ENCODE measurements at regions of chr1 and their contacts with region 1.

Region 1: GRCh38 chr1:234862944-234863515 is 253.1 kb upstream of the IRF2BP2 start:
- DNase-seq: peak; percentile 51 to 70
- ATAC-seq: peak; percentile 20 to 30
- H3K4me3 ChIP-seq: peak overlapping the region in 2 of 4 donors; percentile 2 to 17
- H3K27ac ChIP-seq: peak overlapping the region; percentile 68 to 84 (median 75)
- H3K4me1 ChIP-seq: peaks cover 39 to 40% of the 10 kb centered on the region in 2 donors
- H3K27me3 ChIP-seq: no peaks in the 10 kb centered on the region
- CTCF ChIP-seq: no peak
- POLR2A ChIP-seq: no peak

Region 2: DNA sequence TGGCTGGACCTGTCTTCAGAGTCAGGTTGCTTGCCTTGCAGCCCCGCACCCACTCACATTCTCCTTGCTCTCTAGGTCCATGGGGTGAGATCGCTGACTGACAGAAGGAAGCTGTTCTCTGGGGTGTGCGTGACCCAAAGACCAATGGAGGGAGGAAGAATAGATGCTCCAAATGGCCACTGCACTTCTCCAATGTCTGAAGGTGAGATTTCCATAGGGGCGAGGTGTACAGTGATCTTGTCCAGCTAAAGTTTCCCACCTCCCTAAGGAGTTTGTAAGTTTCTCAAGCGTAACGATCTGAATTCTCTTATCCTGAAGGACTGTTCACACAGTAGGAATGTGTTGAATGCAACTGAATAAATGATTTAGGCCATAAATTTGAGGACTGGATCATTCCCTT is 41.2 kb before region 1 on chr1:
- in situ Hi-C with region 1: no loop called
- intact Hi-C with region 1: loop called (anchors 2 kb)
- DNase-seq: no peak
- ATAC-seq: no peak
- H3K4me3 ChIP-seq: no peak overlapping the region
- H3K27ac ChIP-seq: no peak overlapping the region
- H3K4me1 ChIP-seq: peaks cover 6% of the 10 kb centered on the region in 2 donors
- H3K27me3 ChIP-seq: no peaks in the 10 kb centered on the region
- CTCF ChIP-seq: no peak
- POLR2A ChIP-seq: no peak

Region 3: GRCh38 chr1:234907940-234908405 is 44.9 kb after region 1 on chr1:
- in situ Hi-C with region 1: no loop called
- intact Hi-C with region 1: no loop called
- DNase-seq: no peak
- ATAC-seq: peak in 1 of 2 donors; percentile 26
- H3K4me3 ChIP-seq: no peak overlapping the region
- H3K27ac ChIP-seq: peak overlapping the region in 1 of 4 donors; percentile 27
- H3K4me1 ChIP-seq: peaks cover 9 to 12% of the 10 kb centered on the region in 2 donors
- H3K27me3 ChIP-seq: no peaks in the 10 kb centered on the region
- CTCF ChIP-seq: no peak
- POLR2A ChIP-seq: no peak

Region 4: GRCh38 chr1:235060607-235061470 is 197.8 kb after region 1 on chr1:
- in situ Hi-C with region 1: no loop called
- intact Hi-C with region 1: no loop called
- DNase-seq: peak in 1 of 2 donors; percentile 56
- ATAC-seq: peak in 1 of 2 donors; percentile 40
- H3K4me3 ChIP-seq: no peak overlapping the region
- H3K27ac ChIP-seq: peak overlapping the region in 2 of 4 donors; percentile 69 to 72
- H3K4me1 ChIP-seq: peaks cover 11 to 25% of the 10 kb centered on the region in 2 donors
- H3K27me3 ChIP-seq: no peaks in the 10 kb centered on the region
- CTCF ChIP-seq: no peak
- POLR2A ChIP-seq: no peak

Measured in gastrocnemius medialis (tissue), 4 donors.